WTC11 (cell line): ENCODE measurements at regions of chr6 and their contacts with region 1.

Region 1: GRCh38 chr6:32195652-32195901 is 3.1 kb upstream of the GPSM3 start:
- DNase-seq: peak; percentile 100
- ATAC-seq: peak; percentile 88
- H3K4me3 Mint-ChIP-seq: peak overlapping the region; percentile 95
- H3K27ac Mint-ChIP-seq: no peak overlapping the region; the same call in 1 of the 2 replicates
- H3K4me1 Mint-ChIP-seq: peaks cover 53% of the 10 kb centered on the region
- H3K27me3 Mint-ChIP-seq: peaks cover 3% of the 10 kb centered on the region; the same call in 1 of the 2 replicates
- CTCF ChIP-seq: no peak; the same call in 1 of the 2 replicates

Region 2: GRCh38 chr6:32087574-32088486 is 107.7 kb before region 1 on chr6:
- CTCF ChIA-PET with region 1: interaction called, 11 read pairs
- POLR2A ChIA-PET with region 1: no interaction called
- DNase-seq: peak; percentile 93
- ATAC-seq: peak; percentile 94
- H3K4me3 Mint-ChIP-seq: peak overlapping the region; percentile 53
- H3K27ac Mint-ChIP-seq: no peak overlapping the region
- H3K4me1 Mint-ChIP-seq: peaks cover 16% of the 10 kb centered on the region
- H3K27me3 Mint-ChIP-seq: peaks cover 13% of the 10 kb centered on the region
- CTCF ChIP-seq: 0 out of 2 replicates have a peak, but pooled peaks have one; percentile 27

Region 3: GRCh38 chr6:32153564-32154513 is 41.7 kb before region 1 on chr6 and contains the start of gene PPT2:
- CTCF ChIA-PET with region 1: interaction called, 17 read pairs
- POLR2A ChIA-PET with region 1: interaction called, 6 read pairs
- DNase-seq: peak; percentile 89
- ATAC-seq: peak; percentile 54
- H3K4me3 Mint-ChIP-seq: peak within 1 kb of the TSS; percentile 100
- H3K27ac Mint-ChIP-seq: peak within 1 kb of the TSS; percentile 99
- H3K4me1 Mint-ChIP-seq: peaks cover 35% of the 10 kb centered on the region
- H3K27me3 Mint-ChIP-seq: peaks cover 39% of the 10 kb centered on the region
- CTCF ChIP-seq: no peak
- total RNA-seq, gene PPT2: 30.0 to 33.8 TPM (median 31.6 TPM) in 3 replicates

Region 4: GRCh38 chr6:32177788-32178546 is 17.6 kb before region 1 on chr6 and contains the start of gene RNF5:
- CTCF ChIA-PET with region 1: interaction called, 30 read pairs
- POLR2A ChIA-PET with region 1: interaction called, 25 read pairs
- DNase-seq: peak; percentile 94
- ATAC-seq: peak; percentile 78
- H3K4me3 Mint-ChIP-seq: peak within 1 kb of the TSS; percentile 82
- H3K27ac Mint-ChIP-seq: peak within 1 kb of the TSS; percentile 98
- H3K4me1 Mint-ChIP-seq: peaks cover 38% of the 10 kb centered on the region
- H3K27me3 Mint-ChIP-seq: no peaks in the 10 kb centered on the region
- CTCF ChIP-seq: no peak
- total RNA-seq, gene RNF5: 108 to 114 TPM (median 111 TPM) in 3 replicates

Region 5: GRCh38 chr6:32402812-32403211 is 207.2 kb after region 1 on chr6:
- CTCF ChIA-PET with region 1: no interaction called
- POLR2A ChIA-PET with region 1: no interaction called
- DNase-seq: no peak
- ATAC-seq: peak; percentile 70
- H3K4me3 Mint-ChIP-seq: no peak overlapping the region
- H3K27ac Mint-ChIP-seq: no peak overlapping the region
- H3K4me1 Mint-ChIP-seq: peaks cover 10% of the 10 kb centered on the region; the same call in 1 of the 2 replicates
- H3K27me3 Mint-ChIP-seq: peaks cover 7% of the 10 kb centered on the region; the same call in 1 of the 2 replicates
- CTCF ChIP-seq: no peak

Region 6: DNA sequence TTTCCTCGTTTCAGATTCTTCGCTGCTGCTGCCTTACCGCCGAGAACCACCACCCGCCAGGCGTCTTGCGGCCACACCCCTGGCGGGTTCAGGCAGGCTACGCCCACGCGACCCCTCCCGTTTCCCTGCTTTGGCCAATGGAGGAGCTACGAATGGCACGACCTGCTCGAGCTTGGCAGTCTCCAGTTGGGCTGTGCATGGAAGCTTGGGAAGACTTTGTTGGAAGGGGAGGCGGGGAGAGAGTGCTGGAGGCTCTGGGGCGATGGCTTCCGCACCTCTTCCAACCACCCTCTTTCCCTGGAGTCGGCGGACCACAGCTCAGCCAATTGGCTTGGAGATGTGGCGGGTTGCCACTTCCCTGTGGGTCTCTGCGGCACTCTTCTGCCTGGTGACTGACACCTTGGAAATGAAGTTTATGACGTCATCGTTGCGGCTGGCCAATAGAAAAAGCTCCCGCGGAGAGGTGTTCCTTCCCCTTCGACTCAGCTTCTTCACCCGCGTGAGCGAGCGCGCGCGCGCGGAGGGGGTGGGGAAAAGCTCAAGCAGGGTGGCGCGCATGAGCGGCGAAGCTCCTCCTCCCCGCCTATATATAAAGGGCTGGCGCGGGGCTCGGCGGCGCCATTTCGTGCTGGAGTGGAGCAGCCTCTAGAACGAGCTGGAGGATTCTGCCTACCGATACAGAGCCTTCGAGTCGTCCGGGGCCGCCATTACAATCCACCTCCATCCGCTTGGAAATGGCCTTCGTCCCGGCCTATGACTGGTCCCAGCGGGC is 776.2 kb after region 1 on chr6:
- CTCF ChIA-PET with region 1: no interaction called
- POLR2A ChIA-PET with region 1: interaction called, 12 read pairs
- DNase-seq: peak; percentile 99
- ATAC-seq: peak; percentile 56
- H3K4me3 Mint-ChIP-seq: peak overlapping the region; percentile 98
- H3K27ac Mint-ChIP-seq: peak overlapping the region; percentile 100
- H3K4me1 Mint-ChIP-seq: peaks cover 32% of the 10 kb centered on the region
- H3K27me3 Mint-ChIP-seq: peaks cover 4% of the 10 kb centered on the region; the same call in 1 of the 2 replicates
- CTCF ChIP-seq: no peak